ENCODE measurements at regions of chr6 and their contacts with region 1.

Region 1: GRCh38 chr6:17519120-17519519 is 81.0 kb upstream of the FAM8A1 start:
- DNase-seq: peak; percentile 53
- ATAC-seq: peak; percentile 80
- H3K4me3 ChIP-seq: no peak overlapping the region
- H3K27ac ChIP-seq: no peak overlapping the region
- H3K4me1 ChIP-seq: peaks cover 5% of the 10 kb centered on the region
- H3K27me3 ChIP-seq: no peaks in the 10 kb centered on the region
- CTCF ChIP-seq: no peak
- POLR2A ChIP-seq: no peak
- RAD21 ChIP-seq: no peak

Region 2: DNA sequence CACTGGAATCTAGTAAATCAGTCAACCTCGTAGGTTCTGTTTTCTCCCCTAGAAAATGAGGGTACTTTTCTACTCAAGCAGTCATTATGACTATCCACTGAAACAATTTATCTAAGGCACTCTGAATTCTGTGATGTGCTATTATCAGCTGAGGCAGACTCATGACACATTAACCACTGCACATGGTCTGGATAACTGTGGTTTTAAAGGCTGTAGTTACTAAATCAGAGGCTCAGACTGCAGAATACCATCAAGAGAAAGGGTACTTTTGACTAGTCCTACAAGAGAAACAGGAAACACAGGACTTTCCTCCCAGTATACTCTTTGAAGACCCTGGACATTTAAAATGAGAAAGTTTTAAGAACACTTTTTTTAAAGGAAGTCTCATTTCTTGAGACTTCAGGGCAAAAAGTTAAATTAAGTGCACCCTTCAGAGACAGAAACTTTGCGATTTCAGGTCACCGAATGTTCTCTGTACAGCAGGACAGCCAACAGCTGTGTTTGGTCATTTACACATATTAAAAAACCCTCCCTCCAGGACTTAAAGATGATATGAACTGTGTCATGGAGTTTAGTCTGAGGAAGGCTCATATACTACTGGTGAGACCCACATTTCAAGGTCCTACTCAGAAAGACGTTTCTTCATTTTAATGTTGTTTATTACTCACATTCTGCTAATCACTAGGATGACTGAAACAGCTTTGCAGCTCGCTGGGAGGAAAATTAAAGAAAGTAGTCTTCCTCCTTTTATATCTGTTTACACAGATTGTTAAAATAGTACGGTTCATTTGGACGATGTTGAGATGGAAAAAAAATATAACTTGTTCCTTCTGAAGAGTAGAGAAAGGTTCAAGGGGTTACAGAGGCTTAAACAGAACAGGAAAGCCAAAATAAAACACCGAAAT is 777.8 kb before region 1 on chr6:
- CTCF ChIA-PET with region 1: no interaction called
- POLR2A ChIA-PET with region 1: no interaction called
- dilution Hi-C with region 1: no loop called
- in situ Hi-C with region 1: no loop called
- intact Hi-C with region 1: no loop called
- DNase-seq: peak; percentile 98
- ATAC-seq: peak; percentile 88
- H3K4me3 ChIP-seq: peak overlapping the region; percentile 27; the same call in 1 of the 2 replicates
- H3K27ac ChIP-seq: no peak overlapping the region; the same call in 1 of the 2 replicates
- H3K4me1 ChIP-seq: peaks cover 22% of the 10 kb centered on the region
- H3K27me3 ChIP-seq: no peaks in the 10 kb centered on the region
- CTCF ChIP-seq: no peak
- POLR2A ChIP-seq: peak; percentile 68; the same call in 1 of the 2 replicates
- RAD21 ChIP-seq: no peak

Region 3: GRCh38 chr6:17497535-17498095 is 21.5 kb before region 1 on chr6:
- CTCF ChIA-PET with region 1: no interaction called
- POLR2A ChIA-PET with region 1: no interaction called
- dilution Hi-C with region 1: no loop called
- in situ Hi-C with region 1: no loop called
- intact Hi-C with region 1: no loop called
- DNase-seq: no peak
- ATAC-seq: no peak
- H3K4me3 ChIP-seq: no peak overlapping the region
- H3K27ac ChIP-seq: no peak overlapping the region
- H3K4me1 ChIP-seq: peaks cover 6% of the 10 kb centered on the region; the same call in 1 of the 2 replicates
- H3K27me3 ChIP-seq: no peaks in the 10 kb centered on the region
- CTCF ChIP-seq: no peak
- POLR2A ChIP-seq: no peak
- RAD21 ChIP-seq: no peak

Region 4: GRCh38 chr6:17556014-17556413 is 36.9 kb after region 1 on chr6:
- CTCF ChIA-PET with region 1: no interaction called
- POLR2A ChIA-PET with region 1: no interaction called
- dilution Hi-C with region 1: no loop called
- in situ Hi-C with region 1: no loop called
- intact Hi-C with region 1: loop called (anchors 5 kb)
- DNase-seq: peak; percentile 12
- ATAC-seq: no peak
- H3K4me3 ChIP-seq: no peak overlapping the region
- H3K27ac ChIP-seq: no peak overlapping the region; the same call in 1 of the 2 replicates
- H3K4me1 ChIP-seq: no peaks in the 10 kb centered on the region
- H3K27me3 ChIP-seq: no peaks in the 10 kb centered on the region
- CTCF ChIP-seq: no peak
- POLR2A ChIP-seq: no peak
- RAD21 ChIP-seq: no peak

Region 5: DNA sequence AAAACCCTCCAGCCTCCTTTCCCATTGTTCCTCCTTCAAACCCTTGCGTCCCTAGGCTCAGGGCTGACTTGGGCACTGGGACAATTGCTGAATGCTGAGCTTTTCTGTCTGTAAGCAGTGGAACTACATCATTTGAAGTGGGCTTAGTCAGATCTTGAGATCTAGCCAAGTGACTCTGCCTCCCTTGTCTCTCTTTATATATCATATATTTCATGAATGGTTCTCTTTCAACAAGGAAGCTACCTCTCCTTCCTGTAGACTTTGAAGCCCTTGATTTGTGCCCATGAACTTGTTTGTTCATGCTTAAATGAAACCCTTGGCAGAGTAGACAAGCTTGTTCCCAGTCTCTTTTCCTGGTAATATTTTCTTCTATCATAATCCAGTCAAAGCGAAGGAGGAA is 528.3 kb after region 1 on chr6:
- CTCF ChIA-PET with region 1: no interaction called
- POLR2A ChIA-PET with region 1: no interaction called
- dilution Hi-C with region 1: no loop called
- in situ Hi-C with region 1: no loop called
- intact Hi-C with region 1: no loop called
- DNase-seq: peak; percentile 84
- ATAC-seq: peak; percentile 25; the same call in 1 of the 2 replicates
- H3K4me3 ChIP-seq: no peak overlapping the region
- H3K27ac ChIP-seq: no peak overlapping the region
- H3K4me1 ChIP-seq: peaks cover 7% of the 10 kb centered on the region
- H3K27me3 ChIP-seq: no peaks in the 10 kb centered on the region
- CTCF ChIP-seq: no peak
- POLR2A ChIP-seq: no peak
- RAD21 ChIP-seq: no peak